B cell (primary cell): ENCODE measurements at regions of chr21 and their contacts with region 1.

Region 1: DNA sequence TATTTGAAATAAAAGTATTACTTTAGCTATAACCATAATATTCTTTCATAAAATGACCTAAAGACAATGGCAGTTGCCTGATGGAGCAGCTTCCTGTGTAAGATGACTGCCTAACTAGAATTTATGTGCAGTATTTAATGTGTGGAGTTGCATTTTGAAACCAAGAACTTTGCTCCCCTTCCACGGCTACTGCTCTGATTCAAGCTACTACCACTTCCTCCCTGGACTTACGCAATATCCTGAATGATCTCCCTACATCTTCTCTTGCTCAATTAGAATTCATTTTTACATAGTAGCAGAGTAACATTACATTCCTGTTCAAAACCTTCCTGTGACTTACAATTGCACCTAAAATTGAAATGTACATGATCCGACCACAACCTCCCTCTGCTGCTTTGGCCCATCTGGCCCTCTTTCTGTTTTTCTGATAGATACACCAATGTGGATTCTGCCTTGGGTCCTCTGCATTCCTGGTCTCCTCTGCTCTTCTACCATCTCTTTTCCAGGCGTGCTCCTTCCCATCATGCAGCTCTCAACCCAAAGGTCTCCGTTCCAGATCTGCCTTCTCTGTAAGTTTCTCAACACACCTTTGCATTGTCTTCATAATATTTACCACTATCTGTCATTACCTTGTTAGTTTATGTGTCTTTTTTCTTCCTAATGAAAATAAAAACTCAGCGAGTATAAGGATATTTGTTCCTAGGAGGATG is 47.4 kb upstream of the USP25 start:
- DNase-seq: no peak
- ATAC-seq: no peak
- H3K4me3 ChIP-seq: no peak overlapping the region
- H3K4me3 Mint-ChIP-seq: no peak overlapping the region
- H3K27ac ChIP-seq: no peak overlapping the region
- H3K27ac Mint-ChIP-seq: no peak overlapping the region
- H3K4me1 ChIP-seq: no peaks in the 10 kb centered on the region
- H3K4me1 Mint-ChIP-seq: no peaks in the 10 kb centered on the region
- H3K27me3 ChIP-seq: no peaks in the 10 kb centered on the region
- H3K27me3 Mint-ChIP-seq: no peaks in the 10 kb centered on the region
- CTCF ChIP-seq: no peak

Region 2: DNA sequence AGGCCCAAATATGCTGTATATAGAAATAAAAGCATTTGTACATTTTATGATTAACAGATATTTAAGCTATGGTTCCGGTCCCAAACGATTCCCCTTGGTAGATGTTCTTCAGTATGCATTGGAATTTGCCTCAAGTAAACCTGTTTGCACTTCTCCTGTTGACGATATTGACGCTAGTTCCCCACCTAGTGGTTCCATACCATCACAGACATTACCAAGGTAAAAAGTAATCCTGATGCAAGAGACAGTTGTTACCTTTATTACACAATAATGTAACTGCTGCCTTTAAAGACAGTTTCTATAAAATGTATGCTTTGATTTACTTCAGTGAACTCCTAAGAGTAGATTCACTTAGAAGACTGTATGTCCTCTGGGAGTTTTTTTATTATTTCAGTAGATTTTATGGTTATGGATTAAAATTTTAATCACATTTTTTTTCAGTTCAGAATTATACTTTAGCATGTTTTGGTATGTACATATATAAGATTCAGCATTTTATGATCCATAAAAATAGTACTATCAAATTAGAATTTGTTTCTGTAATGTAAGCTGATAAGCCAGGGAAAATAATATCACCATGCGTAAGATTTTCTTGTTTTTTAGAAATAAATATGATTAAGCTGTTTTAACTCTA is 143.9 kb after region 1 on chr21:
- CTCF ChIA-PET with region 1: no interaction called
- POLR2A ChIA-PET with region 1: no interaction called
- intact Hi-C with region 1: loop called (anchors 5 kb)
- DNase-seq: peak; percentile 47
- ATAC-seq: peak; percentile 54
- H3K4me3 ChIP-seq: no peak overlapping the region
- H3K4me3 Mint-ChIP-seq: no peak overlapping the region
- H3K27ac ChIP-seq: peak overlapping the region in 1 of 2 donors; percentile 13
- H3K27ac Mint-ChIP-seq: no peak overlapping the region
- H3K4me1 ChIP-seq: no peaks in the 10 kb centered on the region
- H3K4me1 Mint-ChIP-seq: no peaks in the 10 kb centered on the region
- H3K27me3 ChIP-seq: no peaks in the 10 kb centered on the region
- H3K27me3 Mint-ChIP-seq: no peaks in the 10 kb centered on the region
- CTCF ChIP-seq: peak; percentile 53